HepG2 (cell line): ENCODE measurements at regions of chr12 and their contacts with region 1.

Region 1: DNA sequence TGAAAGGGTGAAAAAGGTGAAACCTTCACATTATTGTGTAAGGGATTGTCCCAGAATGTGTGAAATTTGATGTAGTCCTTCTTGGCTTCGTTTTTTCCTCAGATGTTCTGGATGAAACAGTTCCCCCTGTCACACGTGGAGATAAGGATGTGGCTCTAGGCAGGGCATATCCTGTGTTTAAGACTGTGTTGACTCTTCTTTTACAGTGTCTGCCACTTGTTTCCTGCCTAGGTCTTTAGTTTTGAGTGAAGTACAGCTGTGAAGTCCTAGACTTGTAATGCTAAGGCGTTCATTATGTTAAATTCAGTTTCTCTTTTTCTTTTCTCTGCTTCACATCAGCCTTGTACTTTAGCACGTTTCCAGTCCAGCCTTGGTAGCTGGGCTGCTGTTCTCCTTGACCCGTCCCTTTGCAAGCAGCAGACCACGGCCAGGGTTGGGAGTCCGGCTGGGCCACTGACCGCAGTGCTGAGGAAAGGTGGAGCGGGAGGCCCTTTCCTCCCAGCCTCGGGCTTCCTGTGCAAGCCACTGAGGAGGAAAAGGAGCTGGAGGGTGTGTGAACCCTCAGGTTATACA is 59.1 kb downstream of the RASSF3 start:
- DNase-seq: peak; percentile 49
- ATAC-seq: peak; percentile 86
- H3K4me3 ChIP-seq: peak overlapping the region; percentile 11 to 33 (median 33); a peak in 5 of 6 replicates
- H3K27ac ChIP-seq: peak overlapping the region; percentile 78
- H3K4me1 ChIP-seq: peaks cover 96% of the 10 kb centered on the region
- H3K27me3 ChIP-seq: no peaks in the 10 kb centered on the region
- CTCF ChIP-seq: no peak
- EP300 ChIP-seq: no peak
- POLR2A ChIP-seq: no peak
- RAD21 ChIP-seq: no peak

Region 2: GRCh38 chr12:64625243-64626077 is 43.9 kb before region 1 on chr12:
- CTCF ChIA-PET with region 1: no interaction called
- POLR2A ChIA-PET with region 1: interaction called, 5 read pairs
- in situ Hi-C with region 1: no loop called
- intact Hi-C with region 1: loop called (anchors 5 kb)
- DNase-seq: peak; percentile 85
- ATAC-seq: peak; percentile 98
- H3K4me3 ChIP-seq: peak overlapping the region; percentile 55 to 68 (median 67)
- H3K27ac ChIP-seq: peak overlapping the region; percentile 94
- H3K4me1 ChIP-seq: peaks cover 38% of the 10 kb centered on the region
- H3K27me3 ChIP-seq: no peaks in the 10 kb centered on the region
- CTCF ChIP-seq: peak; percentile 44
- EP300 ChIP-seq: peak in 1 of 2 experiments; percentile 52; a peak in 2 of 4 replicates
- POLR2A ChIP-seq: peak in 1 of 2 experiments; percentile 56; a peak in 1 of 4 replicates
- RAD21 ChIP-seq: no peak

Region 3: DNA sequence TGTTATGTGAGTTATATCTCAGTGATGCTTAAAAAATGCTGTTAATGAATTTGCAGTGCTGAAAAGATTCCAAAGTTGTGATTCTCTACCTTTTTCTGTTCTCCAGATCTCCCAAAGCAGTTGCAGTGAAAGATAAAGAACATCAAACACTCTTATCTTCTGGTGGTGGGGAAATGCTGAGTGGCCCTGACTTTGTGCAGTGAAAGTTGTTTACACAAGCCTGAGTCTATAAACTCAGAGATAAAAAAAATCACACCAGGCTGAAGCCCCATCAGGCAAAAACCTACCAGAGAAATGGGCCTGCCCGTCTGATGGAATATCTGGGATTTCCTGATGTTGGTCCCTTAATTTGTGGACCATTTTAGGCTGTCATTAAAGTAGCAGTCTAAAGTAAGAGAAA is 12.9 kb before region 1 on chr12:
- CTCF ChIA-PET with region 1: no interaction called
- POLR2A ChIA-PET with region 1: no interaction called
- in situ Hi-C with region 1: no loop called
- intact Hi-C with region 1: loop called (anchors 2 kb)
- DNase-seq: peak; percentile 90
- ATAC-seq: peak; percentile 92
- H3K4me3 ChIP-seq: no peak overlapping the region
- H3K27ac ChIP-seq: peak overlapping the region; percentile 14
- H3K4me1 ChIP-seq: peaks cover 68% of the 10 kb centered on the region
- H3K27me3 ChIP-seq: no peaks in the 10 kb centered on the region
- CTCF ChIP-seq: no peak
- EP300 ChIP-seq: peak in 1 of 2 experiments; percentile 95; a peak in 3 of 4 replicates
- POLR2A ChIP-seq: no peak
- RAD21 ChIP-seq: no peak

Region 4: GRCh38 chr12:64824500-64825142 is 155.3 kb after region 1 on chr12 and contains the start of gene TBC1D30:
- CTCF ChIA-PET with region 1: no interaction called
- POLR2A ChIA-PET with region 1: no interaction called
- in situ Hi-C with region 1: no loop called
- intact Hi-C with region 1: no loop called
- DNase-seq: no peak
- ATAC-seq: peak; percentile 79
- H3K4me3 ChIP-seq: peak within 1 kb of the TSS in 1 of 3 experiments; percentile 46; a peak in 1 of 6 replicates
- H3K27ac ChIP-seq: no peak within 1 kb of the TSS
- H3K4me1 ChIP-seq: no peaks in the 10 kb centered on the region
- H3K27me3 ChIP-seq: peaks cover 6 to 30% of the 10 kb centered on the region in 2 experiments; a peak in 4 of 5 replicates
- CTCF ChIP-seq: no peak
- EP300 ChIP-seq: no peak
- POLR2A ChIP-seq: no peak
- RAD21 ChIP-seq: no peak
- total RNA-seq, gene TBC1D30: 0.21 and 0.42 TPM in 2 replicates